CD4-positive, alpha-beta memory T cell (primary cell): ENCODE measurements at regions of chr13 and their contacts with region 1.

Region 1: GRCh38 chr13:52652196-52652979 is at the start of gene SUGT1:
- DNase-seq: peak; percentile 96 to 98 (median 97)
- H3K4me3 ChIP-seq: peak within 1 kb of the TSS; percentile 61 to 94
- H3K4me3 Mint-ChIP-seq: no peak within 1 kb of the TSS
- H3K27ac ChIP-seq: peak within 1 kb of the TSS; percentile 96
- H3K27ac Mint-ChIP-seq: no peak within 1 kb of the TSS
- H3K4me1 ChIP-seq: peaks cover 46% of the 10 kb centered on the region
- H3K4me1 Mint-ChIP-seq: peaks cover 8 to 16% (median 13%) of the 10 kb centered on the region in 4 donors
- H3K27me3 ChIP-seq: no peaks in the 10 kb centered on the region
- H3K27me3 Mint-ChIP-seq: no peaks in the 10 kb centered on the region
- total RNA-seq, gene SUGT1: 40.4 to 42.5 TPM

Region 2: DNA sequence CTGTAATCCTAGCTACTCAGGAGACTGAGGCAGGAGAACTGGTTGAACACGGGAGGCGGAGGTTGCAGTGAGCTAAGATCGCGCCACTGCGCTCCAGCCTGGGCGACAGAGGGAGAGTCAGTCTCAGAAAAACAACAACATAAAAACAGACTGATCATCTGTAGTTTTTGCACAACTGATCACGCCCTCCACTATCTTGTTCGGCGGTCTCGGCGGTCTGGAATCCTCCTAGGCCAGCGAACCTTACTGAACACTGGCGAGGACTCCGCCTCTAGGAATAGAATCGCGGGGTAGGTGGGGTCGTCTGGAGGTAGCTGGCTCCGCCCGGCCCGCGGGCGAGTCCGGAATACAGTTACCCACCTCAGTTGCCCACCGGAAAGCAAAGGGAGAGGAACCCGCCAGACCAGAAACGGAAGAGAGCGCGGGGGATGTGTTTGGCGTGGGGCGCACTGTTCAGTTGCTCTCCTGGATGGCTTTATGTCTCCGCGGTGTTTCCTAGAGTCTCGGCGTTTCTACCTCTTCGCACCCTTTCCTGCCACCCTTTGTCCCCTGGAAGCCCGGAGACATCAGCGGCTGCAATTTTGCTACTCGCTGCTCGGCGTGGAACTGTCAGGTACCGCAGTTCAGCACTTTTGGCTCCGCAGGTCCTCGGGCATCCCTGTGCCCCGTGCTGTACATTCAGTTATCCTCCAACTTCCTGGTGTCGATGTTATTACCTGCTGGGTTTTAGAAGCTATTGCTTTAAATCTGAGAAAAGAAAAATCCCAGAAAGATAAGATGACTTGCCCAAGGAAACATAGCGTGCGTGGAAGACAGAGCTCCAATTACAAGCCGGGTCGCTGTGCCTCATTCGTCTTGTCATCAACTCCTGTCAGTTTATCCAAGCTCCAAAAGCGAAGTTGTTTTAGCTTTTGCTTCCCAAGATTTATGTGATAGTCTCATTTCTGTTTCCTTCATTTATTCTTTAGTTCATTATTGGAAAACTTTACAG is 35.0 kb before region 1 on chr13:
- CTCF ChIA-PET with region 1: interaction called, 54 read pairs
- POLR2A ChIA-PET with region 1: interaction called, 158 read pairs
- intact Hi-C with region 1: loop called (anchors 1 kb)
- DNase-seq: peak; percentile 82 to 86 (median 84)
- H3K4me3 ChIP-seq: peak overlapping the region; percentile 57 to 67
- H3K4me3 Mint-ChIP-seq: peak overlapping the region; percentile 98 to 99 (median 99)
- H3K27ac ChIP-seq: peak overlapping the region; percentile 58
- H3K27ac Mint-ChIP-seq: peak overlapping the region; percentile 86 to 98 (median 97)
- H3K4me1 ChIP-seq: peaks cover 30% of the 10 kb centered on the region
- H3K4me1 Mint-ChIP-seq: peaks cover 20 to 55% (median 38%) of the 10 kb centered on the region in 4 donors
- H3K27me3 ChIP-seq: no peaks in the 10 kb centered on the region
- H3K27me3 Mint-ChIP-seq: no peaks in the 10 kb centered on the region

Region 3: DNA sequence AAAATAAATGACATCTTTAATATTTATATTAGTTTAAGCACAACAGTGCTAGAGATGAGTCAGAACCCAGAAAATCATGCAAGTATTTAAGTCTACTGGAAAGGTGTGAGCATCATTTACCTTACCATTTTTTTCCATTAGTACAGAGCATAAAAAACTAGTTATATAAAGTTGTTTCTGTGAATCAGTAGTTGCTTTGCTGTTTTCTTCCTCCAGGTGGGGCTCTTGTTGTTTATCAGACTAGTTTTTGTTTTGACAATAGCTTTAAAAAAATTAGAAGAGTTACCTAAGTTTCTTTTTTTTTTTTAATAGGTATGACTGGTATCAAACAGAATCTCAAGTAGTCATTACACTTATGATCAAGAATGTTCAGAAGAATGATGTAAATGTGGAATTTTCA is 12.9 kb after region 1 on chr13:
- CTCF ChIA-PET with region 1: interaction called, 25 read pairs
- POLR2A ChIA-PET with region 1: interaction called, 26 read pairs
- intact Hi-C with region 1: no loop called
- DNase-seq: peak in 4 of 5 donors; percentile 14 to 39 (median 19)
- H3K4me3 ChIP-seq: no peak overlapping the region
- H3K4me3 Mint-ChIP-seq: no peak overlapping the region
- H3K27ac ChIP-seq: no peak overlapping the region
- H3K27ac Mint-ChIP-seq: peak overlapping the region in 3 of 7 donors; percentile 27 to 72 (median 42)
- H3K4me1 ChIP-seq: no peaks in the 10 kb centered on the region
- H3K4me1 Mint-ChIP-seq: peaks cover 4 to 6% (median 4%) of the 10 kb centered on the region in 4 donors
- H3K27me3 ChIP-seq: no peaks in the 10 kb centered on the region
- H3K27me3 Mint-ChIP-seq: no peaks in the 10 kb centered on the region